Cardiac septum (tissue), 1 donor: ENCODE measurements at regions of chr2 and their contacts with region 1.

Region 1: DNA sequence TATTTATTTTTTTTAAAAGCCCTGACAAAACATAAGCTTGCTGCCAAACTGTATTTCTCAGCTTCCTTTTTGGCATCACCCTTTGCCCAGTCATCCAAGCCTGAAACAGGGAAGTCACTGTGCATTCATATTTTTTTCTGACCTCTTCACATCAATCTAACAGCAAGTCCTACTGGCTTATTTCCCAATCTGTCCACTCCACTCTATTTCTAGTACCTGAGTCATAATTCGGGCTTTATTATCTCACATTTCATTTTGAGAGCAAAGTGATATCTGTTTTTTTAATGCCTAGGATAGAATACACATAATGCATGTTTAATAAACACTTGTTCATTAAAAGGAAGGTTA is 5.1 kb downstream of the HNMT start:
- DNase-seq: no peak

Region 2: DNA sequence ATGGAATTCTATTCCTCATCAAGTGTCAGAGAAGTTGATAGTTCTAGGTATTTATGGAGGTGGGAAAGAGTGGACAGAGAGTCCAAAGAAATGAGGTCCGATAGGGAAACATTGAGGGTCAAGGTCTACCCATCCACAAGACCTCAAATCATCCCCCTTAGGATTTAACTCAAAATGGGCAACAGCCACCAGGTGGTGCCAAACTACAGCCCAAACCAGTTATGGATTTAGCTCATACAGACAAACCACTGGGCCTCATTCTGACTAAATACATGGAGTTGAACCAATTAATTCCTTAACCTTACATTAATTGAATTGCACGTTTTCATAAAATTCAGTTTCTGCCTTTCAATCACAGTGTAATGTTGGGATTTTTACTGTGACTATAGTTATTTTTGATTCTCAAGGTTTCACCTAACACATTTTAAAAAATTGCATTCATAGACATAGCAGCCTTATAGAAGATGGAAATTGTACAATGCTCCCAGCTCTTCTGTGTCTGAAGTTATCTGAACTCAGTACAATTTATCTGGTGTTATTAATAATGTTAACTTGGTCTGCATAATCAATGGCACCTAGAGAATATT is 103.3 kb before region 1 on chr2:
- intact Hi-C with region 1: no loop called
- DNase-seq: no peak

Region 3: GRCh38 chr2:138023298-138023697 is 53.9 kb after region 1 on chr2:
- intact Hi-C with region 1: no loop called
- DNase-seq: no peak

Region 4: DNA sequence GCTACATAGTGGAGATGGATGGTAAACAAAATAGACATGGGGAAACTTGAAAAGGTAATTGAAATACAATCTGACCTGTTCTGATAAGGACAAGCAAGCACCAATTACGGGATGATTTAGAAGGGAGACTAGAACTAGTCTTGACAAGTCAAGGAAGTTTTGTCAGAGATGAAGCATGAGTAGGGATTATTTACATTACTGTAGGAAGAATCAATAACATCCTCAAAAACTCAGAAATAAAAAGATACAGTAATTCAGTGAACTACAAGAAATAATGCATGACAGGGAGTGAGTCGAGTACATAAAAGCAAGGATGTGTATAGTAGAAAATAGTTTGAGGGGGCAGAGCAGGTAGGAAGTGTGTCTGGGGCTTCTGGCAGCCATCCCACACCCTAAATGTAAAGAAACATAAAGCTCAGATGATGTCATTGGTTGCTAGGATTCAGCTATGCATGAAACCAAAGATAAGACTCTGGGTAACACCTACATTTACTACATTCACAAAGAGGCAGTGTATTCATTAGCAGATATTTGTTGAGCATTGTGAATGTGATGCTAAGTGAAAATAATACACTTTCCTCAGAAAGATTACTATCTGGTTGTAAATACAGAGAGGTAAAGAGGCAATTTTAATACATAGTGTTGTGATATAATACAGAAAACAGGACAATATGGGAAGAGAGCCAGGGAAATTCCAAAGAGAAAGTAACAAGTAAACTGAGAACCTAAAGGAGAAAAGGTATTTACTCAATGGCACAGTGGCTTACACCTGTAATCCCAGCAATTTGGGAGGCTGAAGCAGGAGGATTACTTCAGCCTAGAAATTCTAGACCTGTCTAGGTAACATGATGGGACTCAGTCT is 153.0 kb after region 1 on chr2:
- intact Hi-C with region 1: no loop called
- DNase-seq: no peak

Region 5: DNA sequence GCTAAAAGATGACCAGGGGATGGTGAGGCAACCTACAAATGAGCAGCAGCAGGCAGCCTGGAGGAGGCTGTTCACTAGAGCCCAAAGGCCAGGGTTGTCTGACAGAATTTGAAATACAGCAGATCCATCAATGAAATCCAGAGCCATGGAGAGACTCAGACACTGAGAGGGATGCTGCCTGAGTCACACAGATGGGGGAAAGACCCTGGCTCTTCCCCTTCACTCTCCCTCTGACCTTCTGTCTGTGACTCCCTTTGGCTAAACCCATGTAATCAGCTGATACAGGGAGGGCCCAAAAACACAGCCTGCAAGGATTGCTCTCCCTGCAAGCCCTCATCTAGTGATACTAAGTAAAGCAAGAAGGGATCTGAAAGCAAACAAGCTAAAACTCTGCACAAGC is 365.6 kb after region 1 on chr2:
- intact Hi-C with region 1: no loop called
- DNase-seq: no peak

Region 6: DNA sequence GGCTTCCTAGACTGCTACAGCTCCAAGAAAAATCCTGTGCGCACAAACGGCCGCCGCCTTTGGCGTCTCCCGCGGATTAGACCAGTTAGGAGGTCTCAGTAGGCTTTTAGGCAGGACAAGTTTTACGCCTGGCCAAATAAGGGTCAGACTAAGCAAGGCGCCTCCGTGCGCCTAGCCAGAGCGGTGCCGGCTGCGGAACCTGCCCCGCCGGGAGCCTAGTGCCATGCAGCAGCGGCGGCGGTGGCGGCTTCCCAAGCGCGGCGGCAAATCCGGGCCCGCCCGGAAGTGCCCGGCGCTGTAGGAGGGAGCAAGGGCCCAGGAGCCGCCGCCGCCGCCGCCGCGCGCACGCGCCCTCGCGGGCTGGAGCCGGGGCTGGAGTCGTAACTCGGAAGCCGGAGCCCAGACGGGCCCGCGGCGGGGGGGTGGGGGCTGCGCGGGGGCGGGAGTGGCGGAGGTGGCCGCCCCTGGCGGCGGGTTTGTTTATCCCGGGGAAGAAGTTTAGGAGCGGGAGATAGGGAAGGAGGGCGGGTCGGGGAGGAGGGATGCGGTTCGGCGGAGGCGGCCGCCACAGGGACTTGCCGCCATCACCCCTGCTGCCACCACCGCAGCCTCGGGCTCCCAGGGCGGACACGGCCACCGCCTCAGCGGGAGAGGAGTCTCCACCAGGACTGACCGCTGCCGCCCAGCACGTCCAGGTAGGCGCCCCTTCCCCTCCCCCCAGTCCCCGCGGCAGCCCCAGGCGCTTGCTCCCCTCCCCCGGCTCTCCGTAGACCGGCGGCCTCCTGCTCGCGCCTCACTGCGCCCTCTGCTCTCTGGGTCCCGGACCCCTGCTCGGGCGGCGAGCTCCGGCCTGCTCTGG is 532.3 kb after region 1 on chr2 and contains the start of gene SPOPL:
- intact Hi-C with region 1: loop called (anchors 5 kb)
- DNase-seq: peak; percentile 97
- total RNA-seq, gene SPOPL: 15.4 TPM

Region 7: DNA sequence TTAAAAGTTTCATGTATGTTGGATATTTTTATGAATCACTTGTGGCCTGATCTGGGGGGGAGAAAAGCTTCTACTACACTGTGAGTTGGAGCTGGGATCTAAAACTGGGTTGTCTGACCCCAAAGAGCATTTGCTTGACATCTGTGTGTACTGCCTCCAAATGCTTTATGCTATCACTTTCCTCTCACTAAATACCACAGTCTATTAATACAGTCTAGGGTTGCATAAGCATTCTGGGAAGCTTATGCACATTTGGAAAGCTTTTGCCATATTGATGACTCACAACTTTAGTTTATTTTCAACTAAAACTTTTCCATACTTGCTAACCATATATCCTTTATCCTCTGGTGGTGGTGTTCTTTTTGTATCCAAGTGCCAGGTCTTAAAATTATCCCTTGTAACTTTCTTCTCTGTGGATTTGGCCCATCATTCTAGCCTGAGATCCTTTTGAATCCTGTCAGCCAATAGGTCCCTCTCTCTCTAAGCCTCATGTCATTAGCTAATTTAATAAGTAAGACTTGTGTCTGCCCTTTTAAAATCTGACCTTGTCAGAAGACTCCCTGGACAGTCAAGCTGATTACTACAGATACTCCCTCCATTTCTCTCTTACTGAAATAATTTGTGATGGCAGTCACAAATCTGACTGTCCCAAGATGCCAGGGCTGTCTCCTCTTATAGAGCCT is 738.1 kb after region 1 on chr2:
- intact Hi-C with region 1: loop called (anchors 5 kb)
- DNase-seq: no peak